ENCODE measurements at regions of chr2 and their contacts with region 1.

Region 1: GRCh38 chr2:223765221-223765785 is 72.1 kb downstream of the AP1S3 start:
- DNase-seq: no peak
- H3K4me3 Mint-ChIP-seq: no peak overlapping the region
- H3K27ac Mint-ChIP-seq: no peak overlapping the region
- H3K4me1 Mint-ChIP-seq: peaks cover 36% of the 10 kb centered on the region
- H3K27me3 Mint-ChIP-seq: no peaks in the 10 kb centered on the region

Region 2: GRCh38 chr2:223433461-223433860 is 331.8 kb before region 1 on chr2:
- CTCF ChIA-PET with region 1: no interaction called
- POLR2A ChIA-PET with region 1: no interaction called
- DNase-seq: no peak
- H3K4me3 Mint-ChIP-seq: no peak overlapping the region
- H3K27ac Mint-ChIP-seq: no peak overlapping the region
- H3K4me1 Mint-ChIP-seq: no peaks in the 10 kb centered on the region
- H3K27me3 Mint-ChIP-seq: no peaks in the 10 kb centered on the region

Region 3: DNA sequence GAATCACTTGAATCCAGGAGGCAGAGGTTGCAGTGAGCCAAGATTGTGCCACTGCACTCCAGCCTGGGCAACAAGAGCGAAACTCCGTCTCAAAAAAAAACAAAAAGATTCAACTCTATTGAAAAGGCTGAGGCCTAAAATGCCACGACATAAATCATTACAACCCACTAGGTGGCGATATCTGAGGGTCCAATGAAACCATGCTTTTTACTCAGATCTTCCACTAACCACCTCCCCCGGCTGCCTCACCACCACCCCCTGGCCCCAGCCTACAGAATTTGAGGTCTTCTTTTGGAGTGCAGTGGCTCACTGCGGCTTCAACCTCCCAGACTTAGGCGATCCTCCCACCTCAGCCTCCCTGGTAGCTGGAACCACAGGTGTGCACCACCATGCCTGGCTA is 14.6 kb after region 1 on chr2:
- CTCF ChIA-PET with region 1: interaction called, 10 read pairs
- POLR2A ChIA-PET with region 1: interaction called, 4 read pairs
- DNase-seq: peak; percentile 54
- H3K4me3 Mint-ChIP-seq: no peak overlapping the region
- H3K27ac Mint-ChIP-seq: no peak overlapping the region
- H3K4me1 Mint-ChIP-seq: no peaks in the 10 kb centered on the region
- H3K27me3 Mint-ChIP-seq: no peaks in the 10 kb centered on the region